ENCODE measurements at regions of chr3 and their contacts with region 1.

Region 1: GRCh38 chr3:125202197-125202596 is 10.4 kb downstream of the SLC12A8 start:
- DNase-seq: no peak
- ATAC-seq: peak; percentile 66
- H3K4me3 ChIP-seq: no peak overlapping the region
- H3K27ac ChIP-seq: no peak overlapping the region
- H3K4me1 ChIP-seq: peaks cover 15% of the 10 kb centered on the region
- H3K27me3 ChIP-seq: no peaks in the 10 kb centered on the region
- CTCF ChIP-seq: peak; percentile 30 to 49 (median 39); a peak in 4 of 6 replicates
- EP300 ChIP-seq: no peak
- POLR2A ChIP-seq: no peak
- RAD21 ChIP-seq: peak; percentile 72

Region 2: GRCh38 chr3:124995460-124995994 is 206.7 kb before region 1 on chr3:
- CTCF ChIA-PET with region 1: interaction called, 21 read pairs
- POLR2A ChIA-PET with region 1: no interaction called
- RAD21 ChIA-PET with region 1: interaction called, 7 read pairs
- SMC1A ChIA-PET with region 1: interaction called, 17 read pairs
- in situ Hi-C with region 1: no loop called
- intact Hi-C with region 1: loop called (anchors 2 kb)
- DNase-seq: peak; percentile 20
- ATAC-seq: peak; percentile 96
- H3K4me3 ChIP-seq: no peak overlapping the region
- H3K27ac ChIP-seq: peak overlapping the region; percentile 38
- H3K4me1 ChIP-seq: peaks cover 5% of the 10 kb centered on the region
- H3K27me3 ChIP-seq: no peaks in the 10 kb centered on the region
- CTCF ChIP-seq: peak; percentile 66 to 92 (median 75); a peak in 4 of 6 replicates
- EP300 ChIP-seq: no peak
- POLR2A ChIP-seq: no peak
- RAD21 ChIP-seq: peak; percentile 91

Region 3: GRCh38 chr3:125107861-125108567 is 94.2 kb before region 1 on chr3:
- CTCF ChIA-PET with region 1: interaction called, 4 read pairs
- POLR2A ChIA-PET with region 1: no interaction called
- RAD21 ChIA-PET with region 1: no interaction called
- SMC1A ChIA-PET with region 1: interaction called, 3 read pairs
- in situ Hi-C with region 1: no loop called
- intact Hi-C with region 1: loop called (anchors 2 kb)
- DNase-seq: peak; percentile 86
- ATAC-seq: peak; percentile 73
- H3K4me3 ChIP-seq: peak overlapping the region; percentile 82
- H3K27ac ChIP-seq: peak overlapping the region; percentile 93
- H3K4me1 ChIP-seq: peaks cover 39% of the 10 kb centered on the region
- H3K27me3 ChIP-seq: no peaks in the 10 kb centered on the region
- CTCF ChIP-seq: no peak
- EP300 ChIP-seq: peak; percentile 8 to 65; a peak in 1 of 4 replicates
- POLR2A ChIP-seq: peak; percentile 62; the same call in 1 of the 2 replicates
- RAD21 ChIP-seq: no peak

Region 4: DNA sequence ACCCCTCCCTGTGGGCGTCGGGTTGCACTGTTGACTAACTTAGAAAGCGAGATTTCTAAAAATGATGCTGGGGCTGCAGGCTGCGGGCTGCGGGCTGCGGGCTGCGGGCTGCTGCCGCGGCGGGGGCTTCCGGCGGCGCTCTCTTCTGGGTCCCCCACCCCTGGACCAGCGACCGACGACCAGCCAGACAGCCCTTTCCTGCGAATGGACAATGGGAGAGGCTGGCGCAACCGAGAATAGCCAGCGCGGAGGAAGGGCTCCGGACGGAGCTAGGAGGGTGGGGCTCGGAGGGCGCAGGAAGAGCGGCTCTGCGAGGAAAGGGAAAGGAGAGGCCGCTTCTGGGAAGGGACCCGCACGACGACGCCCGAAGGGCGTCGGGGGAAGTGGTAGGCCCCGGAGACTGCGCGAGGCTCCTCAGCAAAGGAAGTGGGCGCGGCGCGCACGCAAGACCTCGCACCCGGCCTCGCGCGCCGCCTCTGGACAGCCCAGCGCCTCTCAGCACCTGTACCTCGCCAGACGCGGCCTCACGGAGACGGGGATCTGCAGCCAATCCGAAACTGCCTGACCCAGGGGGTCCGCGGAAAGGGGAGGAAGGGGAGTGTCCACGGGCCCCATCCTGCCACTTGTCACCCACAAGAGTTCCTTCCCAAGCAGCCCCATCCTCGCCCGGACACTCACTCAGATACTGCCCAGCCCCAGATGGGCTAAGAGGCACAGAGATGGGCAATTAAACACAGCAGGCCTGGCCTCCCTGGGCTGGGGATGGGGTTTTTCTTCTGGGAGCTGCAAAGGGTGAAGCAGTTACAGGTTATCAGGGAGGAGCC is 60.4 kb before region 1 on chr3:
- CTCF ChIA-PET with region 1: interaction called, 10 read pairs
- POLR2A ChIA-PET with region 1: interaction called, 3 read pairs
- RAD21 ChIA-PET with region 1: interaction called, 3 read pairs
- SMC1A ChIA-PET with region 1: interaction called, 4 read pairs
- in situ Hi-C with region 1: no loop called
- intact Hi-C with region 1: loop called (anchors 5 kb)
- DNase-seq: no peak
- ATAC-seq: peak; percentile 88
- H3K4me3 ChIP-seq: peak overlapping the region; percentile 60; the same call in 1 of the 2 replicates
- H3K27ac ChIP-seq: peak overlapping the region; percentile 95
- H3K4me1 ChIP-seq: peaks cover 92% of the 10 kb centered on the region
- H3K27me3 ChIP-seq: no peaks in the 10 kb centered on the region
- CTCF ChIP-seq: peak; percentile 47 to 54 (median 54)
- EP300 ChIP-seq: peak; percentile 88; a peak in 3 of 4 replicates
- POLR2A ChIP-seq: peak; percentile 60; the same call in 1 of the 2 replicates
- RAD21 ChIP-seq: peak; percentile 46

Region 5: DNA sequence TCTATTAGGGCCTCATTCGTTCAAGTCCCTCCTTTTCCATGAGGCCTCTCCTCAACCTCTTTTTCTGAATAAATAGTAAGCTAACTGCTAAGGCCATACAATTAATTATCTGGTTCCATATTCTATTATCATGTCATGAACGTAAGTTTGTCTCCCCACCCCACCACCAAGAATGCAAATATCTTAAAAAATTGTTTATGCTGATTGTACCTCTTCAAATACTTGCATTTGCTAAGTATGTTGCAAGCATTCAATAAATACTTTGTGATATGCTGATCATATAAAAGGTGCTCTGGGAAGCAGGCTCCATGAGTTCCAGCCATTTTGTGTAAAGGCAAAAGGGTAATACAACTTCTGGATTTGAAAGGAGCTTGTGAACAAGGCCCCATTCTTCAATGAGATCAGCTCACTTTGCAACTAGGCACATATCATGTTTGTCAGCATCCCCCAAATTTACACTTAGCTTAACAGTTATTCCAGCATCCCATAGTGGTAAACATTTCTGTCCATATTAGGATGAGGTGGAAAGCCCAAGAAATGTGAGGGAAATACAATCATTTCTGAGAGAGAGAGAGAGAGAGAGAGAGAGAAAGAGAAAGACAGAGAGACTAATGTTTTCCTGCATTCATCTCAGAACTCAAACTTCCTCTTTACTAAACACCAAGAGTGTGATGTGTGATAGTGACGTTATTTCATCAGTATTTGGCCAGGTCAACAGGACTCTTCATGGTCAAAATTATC is 22.9 kb before region 1 on chr3:
- CTCF ChIA-PET with region 1: interaction called, 14 read pairs
- POLR2A ChIA-PET with region 1: interaction called, 6 read pairs
- RAD21 ChIA-PET with region 1: interaction called, 21 read pairs
- SMC1A ChIA-PET with region 1: interaction called, 8 read pairs
- in situ Hi-C with region 1: no loop called
- intact Hi-C with region 1: no loop called
- DNase-seq: no peak
- ATAC-seq: peak; percentile 98
- H3K4me3 ChIP-seq: no peak overlapping the region
- H3K27ac ChIP-seq: peak overlapping the region; percentile 61
- H3K4me1 ChIP-seq: peaks cover 8% of the 10 kb centered on the region
- H3K27me3 ChIP-seq: no peaks in the 10 kb centered on the region
- CTCF ChIP-seq: no peak
- EP300 ChIP-seq: no peak; a peak in 1 of 4 replicates
- POLR2A ChIP-seq: no peak
- RAD21 ChIP-seq: no peak

Region 6: DNA sequence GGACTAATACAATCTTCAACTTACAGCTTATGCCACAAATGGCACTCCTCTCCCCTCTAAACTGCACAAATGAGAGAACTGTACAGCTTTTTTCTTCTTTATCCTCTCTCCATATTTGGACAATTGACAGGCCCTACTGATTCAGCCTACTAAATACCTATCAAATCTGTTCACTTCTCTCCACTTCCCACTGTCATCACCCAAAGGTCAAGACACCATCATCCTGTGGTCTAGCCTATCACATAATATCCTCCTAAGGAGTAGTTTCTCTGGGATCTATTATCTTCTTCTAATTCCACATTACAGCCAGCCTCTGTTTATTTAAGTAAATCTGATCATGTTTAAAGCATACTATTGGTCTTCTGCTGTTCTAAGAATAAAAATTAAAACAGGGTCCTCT is 43.3 kb after region 1 on chr3:
- CTCF ChIA-PET with region 1: no interaction called
- POLR2A ChIA-PET with region 1: no interaction called
- RAD21 ChIA-PET with region 1: no interaction called
- SMC1A ChIA-PET with region 1: no interaction called
- in situ Hi-C with region 1: no loop called
- intact Hi-C with region 1: no loop called
- DNase-seq: no peak
- ATAC-seq: no peak
- H3K4me3 ChIP-seq: no peak overlapping the region
- H3K27ac ChIP-seq: no peak overlapping the region
- H3K4me1 ChIP-seq: no peaks in the 10 kb centered on the region
- H3K27me3 ChIP-seq: no peaks in the 10 kb centered on the region
- CTCF ChIP-seq: no peak
- EP300 ChIP-seq: no peak
- POLR2A ChIP-seq: no peak
- RAD21 ChIP-seq: no peak

Region 7: DNA sequence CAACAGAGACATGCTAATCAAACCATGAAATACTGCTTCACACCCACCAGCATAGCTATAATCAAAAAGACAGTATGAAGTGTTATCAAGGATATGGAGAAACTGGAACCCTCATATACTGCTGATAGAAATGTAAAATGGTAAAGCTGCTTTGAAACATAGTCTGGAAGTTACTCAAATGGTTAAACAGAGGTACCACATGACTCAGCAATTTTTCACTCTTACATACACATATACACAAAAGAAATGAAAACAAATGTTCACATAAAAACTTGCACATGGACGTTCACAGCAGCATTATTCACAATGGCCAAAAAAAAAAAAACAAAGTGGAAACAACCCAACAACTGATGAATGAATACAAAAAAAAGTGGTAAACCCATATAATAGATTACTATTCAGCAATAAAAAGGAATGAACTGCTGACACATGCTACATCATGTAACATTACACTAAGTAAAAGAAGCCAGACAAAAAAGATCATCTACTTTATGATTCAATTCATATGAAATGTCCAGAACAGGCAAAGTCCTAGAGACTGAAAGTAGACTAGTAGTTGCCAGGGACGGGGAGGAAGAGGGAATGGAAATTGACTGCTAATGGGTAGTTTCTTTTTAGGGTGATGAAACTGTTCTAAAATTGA is 149.7 kb after region 1 on chr3:
- CTCF ChIA-PET with region 1: no interaction called
- POLR2A ChIA-PET with region 1: no interaction called
- RAD21 ChIA-PET with region 1: no interaction called
- SMC1A ChIA-PET with region 1: no interaction called
- in situ Hi-C with region 1: no loop called
- intact Hi-C with region 1: no loop called
- DNase-seq: no peak
- ATAC-seq: peak; percentile 66
- H3K4me3 ChIP-seq: peak overlapping the region; percentile 4; the same call in 1 of the 2 replicates
- H3K27ac ChIP-seq: peak overlapping the region; percentile 17; the same call in 1 of the 2 replicates
- H3K4me1 ChIP-seq: peaks cover 30% of the 10 kb centered on the region
- H3K27me3 ChIP-seq: no peaks in the 10 kb centered on the region
- CTCF ChIP-seq: no peak
- EP300 ChIP-seq: no peak
- POLR2A ChIP-seq: no peak
- RAD21 ChIP-seq: no peak